Activated CD8-positive, alpha-beta memory T cell treated with anti-CD3 and anti-CD28 coated beads, Interleukin-2, amount 10 ng/mL, durations not matched to agents 7 days and 5 days (primary cell): ENCODE measurements at regions of chr1 and their contacts with region 1.

Region 1: GRCh38 chr1:156838981-156839410 is 19.9 kb downstream of the INSRR start:
- DNase-seq: peak; percentile 66
- ATAC-seq: peak; percentile 60
- H3K4me3 Mint-ChIP-seq: no peak overlapping the region
- H3K27ac Mint-ChIP-seq: no peak overlapping the region
- H3K4me1 Mint-ChIP-seq: peaks cover 37% of the 10 kb centered on the region
- H3K27me3 Mint-ChIP-seq: peaks cover 28% of the 10 kb centered on the region

Region 2: DNA sequence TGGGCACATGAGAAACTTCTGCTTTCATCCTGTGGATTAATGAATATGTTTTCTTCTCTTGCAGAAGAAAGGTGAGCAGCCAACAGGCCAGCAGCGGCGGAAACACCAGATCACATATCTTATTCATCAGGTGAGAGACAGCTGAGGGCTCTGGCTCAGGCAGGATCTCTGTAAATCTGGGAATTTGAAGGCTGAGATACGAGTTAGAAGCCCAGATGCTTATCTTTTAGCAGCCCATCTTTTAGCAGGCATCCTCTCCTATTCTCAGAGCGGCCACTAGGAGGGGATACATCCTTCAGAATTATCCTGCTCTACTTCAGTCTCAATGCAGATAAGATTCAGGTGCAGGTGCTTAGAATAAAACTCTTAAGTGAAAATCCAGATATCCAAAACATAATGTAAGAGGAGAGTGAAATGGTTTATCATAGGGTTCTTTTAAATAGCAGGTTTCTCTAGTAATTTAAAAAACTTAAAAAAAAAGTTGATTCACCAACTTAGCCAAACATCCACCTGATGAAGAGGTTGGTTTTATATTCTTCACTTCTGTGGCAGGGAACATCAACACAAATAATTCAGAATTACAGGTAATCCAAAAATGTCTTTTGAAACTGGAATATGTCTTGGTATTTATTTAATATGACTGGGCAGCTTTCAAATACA is 41.7 kb before region 1 on chr1:
- CTCF ChIA-PET with region 1: interaction called, 23 read pairs
- DNase-seq: peak; percentile 76
- ATAC-seq: peak; percentile 77
- H3K4me3 Mint-ChIP-seq: no peak overlapping the region
- H3K27ac Mint-ChIP-seq: peak overlapping the region; percentile 10
- H3K4me1 Mint-ChIP-seq: peaks cover 30% of the 10 kb centered on the region
- H3K27me3 Mint-ChIP-seq: no peaks in the 10 kb centered on the region

Region 3: DNA sequence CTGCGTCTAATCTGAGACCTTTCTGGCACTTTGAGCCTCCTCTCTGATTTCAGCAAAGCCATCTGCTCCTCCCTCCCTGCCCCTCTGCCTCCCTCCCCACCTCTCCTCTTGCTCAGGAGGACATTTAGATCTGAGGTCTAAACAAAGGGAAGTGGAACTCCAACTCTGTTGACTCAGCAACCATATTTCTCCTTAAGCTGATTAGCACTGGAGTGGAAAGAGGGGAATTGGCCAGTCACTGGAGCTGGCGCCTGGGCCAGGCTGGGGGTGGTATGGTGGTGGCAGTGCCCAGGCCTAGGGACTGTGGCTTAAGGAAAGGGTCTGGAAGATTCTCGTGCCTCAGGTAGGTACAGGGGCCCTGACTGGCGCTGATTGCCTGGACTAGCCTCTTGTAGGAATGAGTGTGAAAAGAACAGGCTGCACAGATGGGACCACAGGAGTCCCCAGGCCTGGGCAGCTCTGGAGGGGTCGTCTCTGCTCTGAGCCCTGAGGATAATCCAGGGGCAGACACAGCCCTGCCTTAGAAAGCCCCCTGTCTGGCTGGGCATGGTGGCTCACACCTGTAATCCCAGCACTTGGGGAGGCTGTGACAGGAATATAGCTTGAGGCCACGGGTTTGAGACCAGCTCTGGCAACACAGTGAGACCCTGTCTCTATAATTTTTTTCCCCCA is 34.3 kb before region 1 on chr1:
- CTCF ChIA-PET with region 1: interaction called, 22 read pairs
- DNase-seq: no peak
- ATAC-seq: no peak
- H3K4me3 Mint-ChIP-seq: no peak overlapping the region
- H3K27ac Mint-ChIP-seq: peak overlapping the region; percentile 64
- H3K4me1 Mint-ChIP-seq: peaks cover 59% of the 10 kb centered on the region
- H3K27me3 Mint-ChIP-seq: no peaks in the 10 kb centered on the region

Region 4: GRCh38 chr1:156813750-156814570 is 25.0 kb before region 1 on chr1:
- CTCF ChIA-PET with region 1: interaction called, 48 read pairs
- DNase-seq: peak; percentile 82
- ATAC-seq: peak; percentile 44
- H3K4me3 Mint-ChIP-seq: peak overlapping the region; percentile 95
- H3K27ac Mint-ChIP-seq: peak overlapping the region; percentile 100
- H3K4me1 Mint-ChIP-seq: peaks cover 71% of the 10 kb centered on the region
- H3K27me3 Mint-ChIP-seq: no peaks in the 10 kb centered on the region

Region 5: DNA sequence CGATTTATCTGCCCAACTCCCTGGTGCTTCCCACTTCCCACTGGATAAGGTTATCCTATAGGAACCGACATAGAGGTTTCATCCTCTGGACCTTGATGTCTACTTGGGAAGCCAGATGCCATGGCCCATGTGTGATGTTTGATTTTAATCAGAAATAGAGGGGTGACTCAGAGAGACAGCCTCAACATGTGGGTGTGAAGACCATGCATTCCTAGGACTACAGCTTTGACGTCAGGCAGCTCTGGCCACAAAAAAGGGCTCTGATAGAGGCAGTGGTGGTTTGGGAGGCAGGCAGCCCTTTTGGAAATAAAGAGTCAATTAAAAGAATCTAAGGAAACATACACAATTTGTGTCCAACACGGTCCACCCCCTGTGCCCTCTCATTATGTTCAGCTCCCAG is 17.2 kb before region 1 on chr1:
- CTCF ChIA-PET with region 1: interaction called, 58 read pairs
- DNase-seq: peak; percentile 59
- ATAC-seq: peak; percentile 62
- H3K4me3 Mint-ChIP-seq: no peak overlapping the region
- H3K27ac Mint-ChIP-seq: no peak overlapping the region
- H3K4me1 Mint-ChIP-seq: peaks cover 34% of the 10 kb centered on the region
- H3K27me3 Mint-ChIP-seq: no peaks in the 10 kb centered on the region

Region 6: DNA sequence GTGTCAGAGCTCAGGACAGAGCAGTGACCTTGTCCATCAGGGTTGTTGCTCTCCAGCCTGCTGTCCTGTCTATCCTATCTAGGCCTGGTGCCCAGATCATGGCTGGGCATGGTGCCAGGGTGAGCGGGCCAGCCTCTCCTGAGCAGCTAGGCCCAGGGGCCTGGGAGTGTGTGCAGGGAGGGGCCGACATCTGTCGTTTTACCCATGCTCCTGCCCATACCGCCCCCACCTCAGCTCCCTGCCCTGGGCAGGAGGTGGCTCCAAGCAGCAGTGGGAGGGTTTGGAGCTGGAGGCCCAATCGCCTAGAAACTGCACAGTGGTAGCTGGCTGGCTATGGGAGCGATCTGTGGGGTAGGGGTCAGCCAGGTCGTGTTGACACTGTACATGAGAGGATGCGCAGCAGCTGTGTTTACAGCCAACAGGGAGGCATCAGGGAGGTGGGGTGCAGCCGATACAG is 13.4 kb after region 1 on chr1:
- CTCF ChIA-PET with region 1: interaction called, 233 read pairs
- DNase-seq: no peak
- ATAC-seq: no peak
- H3K4me3 Mint-ChIP-seq: no peak overlapping the region
- H3K27ac Mint-ChIP-seq: no peak overlapping the region
- H3K4me1 Mint-ChIP-seq: peaks cover 15% of the 10 kb centered on the region
- H3K27me3 Mint-ChIP-seq: peaks cover 27% of the 10 kb centered on the region

Region 7: DNA sequence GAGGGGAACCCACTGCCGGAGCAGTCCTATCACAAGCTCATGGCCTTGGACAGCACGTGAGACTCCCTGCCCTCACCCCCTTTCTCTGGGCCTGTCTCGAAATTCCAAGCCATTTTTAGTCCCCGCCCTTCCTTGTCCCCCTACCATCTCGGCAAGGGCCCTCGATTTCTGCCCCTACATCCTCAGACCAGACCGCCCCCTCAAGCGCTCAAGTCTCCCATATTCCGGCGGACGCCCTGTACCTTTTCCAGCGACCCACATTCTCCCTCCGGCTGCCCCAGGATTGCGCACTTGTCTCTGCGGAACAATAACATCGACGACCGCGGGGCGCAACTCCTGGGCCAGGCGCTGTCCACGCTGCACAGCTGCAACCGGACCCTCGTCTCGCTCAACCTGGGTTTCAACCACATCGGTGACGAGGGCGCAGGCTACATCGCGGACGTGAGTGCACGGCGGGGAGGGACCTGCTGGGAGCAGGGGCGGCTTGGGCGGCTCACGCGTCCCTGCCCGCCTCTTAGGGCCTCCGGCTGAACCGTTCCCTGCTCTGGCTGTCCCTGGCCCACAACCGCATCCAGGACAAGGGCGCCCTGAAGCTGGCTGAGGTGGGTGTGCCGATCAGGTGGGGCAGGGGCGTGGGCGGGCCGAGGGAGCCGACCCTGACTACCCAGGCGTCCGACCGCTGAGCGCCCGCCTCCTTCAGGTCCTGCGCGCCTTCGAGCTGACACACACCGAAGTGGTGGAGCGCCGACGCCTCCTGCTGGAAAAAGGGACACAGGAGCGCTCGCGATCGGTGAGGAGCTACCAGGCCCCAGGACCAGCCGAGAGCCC is 88.4 kb after region 1 on chr1:
- CTCF ChIA-PET with region 1: interaction called, 13 read pairs
- DNase-seq: peak; percentile 75
- ATAC-seq: peak; percentile 79
- H3K4me3 Mint-ChIP-seq: no peak overlapping the region
- H3K27ac Mint-ChIP-seq: no peak overlapping the region
- H3K4me1 Mint-ChIP-seq: peaks cover 33% of the 10 kb centered on the region
- H3K27me3 Mint-ChIP-seq: peaks cover 95% of the 10 kb centered on the region